Tibial artery (tissue), 4 donors: ENCODE measurements at regions of chr11 and their contacts with region 1.

Region 1: GRCh38 chr11:69918938-69919650 is 99.9 kb upstream of the FGF3 start:
- DNase-seq: peak; percentile 63 to 87
- H3K4me3 ChIP-seq: peak overlapping the region in 1 of 2 donors; percentile 26
- H3K27ac ChIP-seq: peak overlapping the region; percentile 91 to 92
- H3K4me1 ChIP-seq: peaks cover 7 to 53% (median 45%) of the 10 kb centered on the region in 4 donors
- H3K27me3 ChIP-seq: no peaks in the 10 kb centered on the region
- CTCF ChIP-seq: peak; percentile 94

Region 2: GRCh38 chr11:69881449-69882269 is 37.4 kb before region 1 on chr11:
- intact Hi-C with region 1: no loop called
- DNase-seq: no peak
- H3K4me3 ChIP-seq: no peak overlapping the region
- H3K27ac ChIP-seq: no peak overlapping the region
- H3K4me1 ChIP-seq: no peaks in the 10 kb centered on the region
- H3K27me3 ChIP-seq: peaks cover 0 to 58% of the 10 kb centered on the region in 2 donors
- CTCF ChIP-seq: no peak

Region 3: DNA sequence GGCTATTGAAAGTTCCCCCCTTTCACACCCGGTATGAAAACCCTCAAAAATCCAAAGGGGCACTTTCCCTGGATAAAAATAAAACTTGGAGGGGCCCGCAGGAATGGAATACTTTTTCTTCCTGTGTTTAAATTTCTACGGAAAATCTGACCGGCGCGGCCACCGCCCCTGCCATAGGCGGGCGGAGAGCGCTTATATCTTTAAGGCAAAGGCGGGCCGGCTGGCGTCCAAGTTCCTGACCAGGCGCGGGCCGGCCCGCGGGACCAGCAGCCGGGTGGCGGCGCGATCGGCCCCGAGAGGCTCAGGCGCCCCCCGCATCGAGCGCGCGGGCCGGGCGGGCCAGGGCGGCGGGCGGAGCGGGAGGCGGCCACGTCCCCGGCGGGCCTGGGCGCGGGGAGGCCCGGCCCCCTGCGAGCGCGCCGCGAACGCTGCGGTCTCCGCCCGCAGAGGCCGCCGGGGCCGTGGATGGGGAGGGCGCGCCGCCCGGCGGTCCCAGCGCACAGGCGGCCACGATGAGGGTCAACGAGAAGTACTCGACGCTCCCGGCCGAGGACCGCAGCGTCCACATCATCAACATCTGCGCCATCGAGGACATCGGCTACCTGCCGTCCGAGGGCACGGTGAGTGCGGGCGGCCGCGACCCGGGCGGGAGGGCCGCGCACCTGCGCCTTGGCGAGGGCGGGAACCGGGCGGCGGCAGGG is 159.2 kb after region 1 on chr11 and contains the start of gene ANO1:
- intact Hi-C with region 1: loop called (anchors 5 kb)
- DNase-seq: peak; percentile 22 to 66
- H3K4me3 ChIP-seq: peak within 1 kb of the TSS; percentile 62 to 70
- H3K27ac ChIP-seq: peak within 1 kb of the TSS; percentile 76 to 86
- H3K4me1 ChIP-seq: peaks cover 0 to 48% (median 24%) of the 10 kb centered on the region in 4 donors
- H3K27me3 ChIP-seq: no peaks in the 10 kb centered on the region
- CTCF ChIP-seq: peak in 1 of 2 experiments; percentile 15

Region 4: DNA sequence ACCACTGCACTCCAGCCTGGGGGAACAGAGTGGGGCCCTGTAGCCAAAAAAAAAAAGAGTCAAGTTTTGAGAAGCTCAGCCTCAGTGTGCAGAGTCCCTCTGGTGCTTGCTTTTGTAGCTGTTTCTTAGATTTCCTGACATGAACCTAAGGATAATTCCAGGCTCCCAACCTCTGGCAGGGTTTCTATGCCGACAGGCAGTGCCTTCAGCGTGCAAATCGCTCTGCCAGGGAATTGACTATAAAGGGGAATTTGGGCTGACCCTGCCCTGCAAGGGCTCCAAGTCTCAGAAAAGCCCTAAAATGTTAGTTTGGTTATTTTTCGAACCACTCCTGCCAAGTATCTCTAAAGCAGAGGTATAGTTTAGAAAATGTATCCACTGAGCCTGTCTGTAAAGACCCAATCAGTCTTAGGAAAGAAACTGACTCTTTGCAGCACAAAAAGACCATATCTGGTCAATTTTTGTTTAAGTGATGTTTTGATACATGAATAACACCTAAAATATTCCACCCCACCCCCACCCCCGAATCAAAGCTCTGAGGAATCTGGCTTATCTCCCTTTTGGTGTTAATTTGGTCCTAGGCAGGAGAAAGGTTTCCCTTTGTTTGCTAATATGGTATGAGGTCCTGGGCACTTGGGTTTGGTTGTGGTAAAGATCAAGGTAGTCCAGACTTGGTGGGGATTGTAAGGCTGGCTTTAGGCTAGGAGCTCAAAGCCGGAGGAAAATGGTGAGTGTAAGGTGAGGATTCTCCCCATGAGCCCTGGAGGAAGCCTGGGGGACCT is 208.8 kb after region 1 on chr11:
- intact Hi-C with region 1: loop called (anchors 2 kb)
- DNase-seq: no peak
- H3K4me3 ChIP-seq: no peak overlapping the region
- H3K27ac ChIP-seq: peak overlapping the region; percentile 64 to 65
- H3K4me1 ChIP-seq: peaks cover 0 to 71% (median 50%) of the 10 kb centered on the region in 4 donors
- H3K27me3 ChIP-seq: no peaks in the 10 kb centered on the region
- CTCF ChIP-seq: no peak